ENCODE measurements at regions of chr5 and their contacts with region 1.

Region 1: GRCh38 chr5:146426853-146427618 is 20.1 kb upstream of the TCERG1 start:
- DNase-seq: no peak
- ATAC-seq: peak in 6 of 8 donors; percentile 37 to 79 (median 52)
- H3K4me3 ChIP-seq: no peak overlapping the region
- H3K27ac ChIP-seq: no peak overlapping the region
- H3K4me1 ChIP-seq: peaks cover 0 to 4% (median 0%) of the 10 kb centered on the region in 9 donors
- H3K27me3 ChIP-seq: peaks cover 0 to 25% (median 5%) of the 10 kb centered on the region in 7 donors
- CTCF ChIP-seq: peak; percentile 37 to 76 (median 70)

Region 2: GRCh38 chr5:146188358-146188757 is 238.7 kb before region 1 on chr5:
- intact Hi-C with region 1: loop called in 3 of 10 experiments (anchors 10 kb)
- DNase-seq: no peak
- ATAC-seq: no peak
- H3K4me3 ChIP-seq: no peak overlapping the region
- H3K27ac ChIP-seq: no peak overlapping the region
- H3K4me1 ChIP-seq: peaks cover 0 to 2% (median 0%) of the 10 kb centered on the region in 9 donors
- H3K27me3 ChIP-seq: peaks cover 0 to 6% (median 0%) of the 10 kb centered on the region in 7 donors
- CTCF ChIP-seq: no peak

Region 3: GRCh38 chr5:146291421-146292074 is 135.5 kb before region 1 on chr5:
- intact Hi-C with region 1: loop called (anchors 1 to 5 kb)
- DNase-seq: peak in 1 of 2 donors; percentile 16
- ATAC-seq: peak in 4 of 8 donors; percentile 52 to 56 (median 54)
- H3K4me3 ChIP-seq: no peak overlapping the region
- H3K27ac ChIP-seq: no peak overlapping the region
- H3K4me1 ChIP-seq: no peaks in the 10 kb centered on the region
- H3K27me3 ChIP-seq: no peaks in the 10 kb centered on the region
- CTCF ChIP-seq: peak; percentile 33 to 73 (median 64)

Measured in heart right ventricle (tissue), 16 donors.